ENCODE measurements at regions of chr9 and their contacts with region 1.

Region 1: DNA sequence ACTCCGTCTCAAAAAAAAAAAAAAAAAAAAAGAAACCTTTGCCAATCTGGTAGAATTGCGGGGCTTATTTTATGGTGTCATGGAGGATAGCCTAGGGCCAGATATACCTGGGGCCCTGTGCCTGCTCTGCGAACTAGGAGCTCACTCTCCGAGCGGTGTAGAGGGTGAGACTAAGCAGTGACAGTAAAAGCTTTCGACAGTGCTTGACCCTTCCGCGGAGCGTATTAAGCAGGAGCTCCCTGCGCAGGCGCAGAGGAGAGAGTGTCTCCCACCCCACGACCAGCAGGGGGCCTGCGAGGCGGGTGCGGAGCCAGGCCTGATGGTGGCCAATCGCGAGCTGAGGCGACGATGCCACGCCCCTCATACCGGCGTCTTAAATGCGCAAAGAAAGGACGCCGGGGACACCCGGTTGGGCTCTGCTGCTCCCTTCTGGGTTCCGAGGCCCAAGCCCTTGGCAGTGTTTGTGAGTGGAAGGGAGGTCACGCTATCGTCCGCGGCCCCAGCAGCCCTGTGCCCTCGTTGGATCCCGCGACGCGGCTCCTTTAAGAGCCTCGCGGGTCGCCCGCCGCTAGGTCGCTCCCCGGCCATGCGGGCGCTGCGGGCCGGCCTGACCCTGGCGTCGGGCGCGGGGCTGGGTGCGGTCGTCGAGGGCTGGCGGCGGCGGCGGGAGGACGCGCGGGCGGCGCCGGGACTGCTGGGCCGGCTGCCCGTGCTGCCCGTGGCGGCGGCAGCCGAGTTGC is at the start of gene ENDOG:
- DNase-seq: peak; percentile 99
- ATAC-seq: peak; percentile 95
- H3K4me3 Mint-ChIP-seq: peak within 1 kb of the TSS; percentile 78
- H3K27ac Mint-ChIP-seq: peak within 1 kb of the TSS; percentile 85
- H3K4me1 Mint-ChIP-seq: peaks cover 9% of the 10 kb centered on the region
- H3K27me3 Mint-ChIP-seq: no peaks in the 10 kb centered on the region
- total RNA-seq, gene ENDOG: 16.2 to 19.5 TPM

Region 2: DNA sequence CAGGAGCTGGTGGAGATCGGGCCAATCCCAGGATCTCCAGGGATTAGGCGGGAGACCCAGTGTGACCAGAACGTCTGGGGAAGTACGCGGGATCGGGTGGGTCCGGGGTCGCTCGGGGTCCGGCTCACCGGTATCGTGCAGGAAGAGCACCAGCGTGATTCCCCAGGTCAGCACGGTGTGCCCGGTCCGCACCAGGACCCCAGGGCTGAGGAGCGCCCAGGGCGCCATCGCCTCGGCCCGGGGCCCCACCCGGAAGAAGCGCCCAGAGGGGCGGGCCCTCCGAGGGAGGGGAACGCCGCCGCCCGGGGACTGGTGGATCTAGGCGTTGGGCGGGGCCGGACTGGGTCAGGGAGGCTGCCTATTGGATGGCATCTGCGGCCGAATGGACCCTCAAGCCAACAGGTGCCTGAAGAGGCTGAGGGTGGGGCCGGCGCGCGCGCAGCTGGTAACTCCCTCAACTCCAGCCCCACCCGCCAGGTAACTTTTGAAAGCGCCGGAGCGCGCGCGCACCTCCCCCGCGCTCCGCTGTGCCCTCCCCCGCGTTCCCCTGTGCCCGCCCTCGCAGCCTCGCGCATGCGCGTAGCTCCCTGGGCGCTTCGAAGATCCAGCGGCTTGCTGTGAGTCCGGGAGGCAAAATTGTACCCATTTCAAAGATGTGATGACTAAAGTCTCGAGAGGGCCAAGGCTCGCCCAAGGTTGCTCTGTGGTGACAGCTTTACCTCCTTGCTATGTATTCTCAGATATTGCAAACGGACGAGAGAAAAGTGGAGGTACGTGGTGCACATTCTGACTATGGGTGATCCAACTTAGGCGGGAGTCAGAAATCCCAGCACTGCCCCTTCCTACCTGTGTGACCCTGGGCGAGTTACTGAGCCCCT is 94.2 kb before region 1 on chr9 and contains the start of gene ZDHHC12:
- POLR2A ChIA-PET with region 1: interaction called, 10 read pairs
- DNase-seq: peak; percentile 99
- ATAC-seq: peak; percentile 99
- H3K4me3 Mint-ChIP-seq: peak within 1 kb of the TSS; percentile 91
- H3K27ac Mint-ChIP-seq: peak within 1 kb of the TSS; percentile 89
- H3K4me1 Mint-ChIP-seq: peaks cover 32% of the 10 kb centered on the region
- H3K27me3 Mint-ChIP-seq: no peaks in the 10 kb centered on the region
- total RNA-seq, gene ZDHHC12: 64.1 to 68.9 TPM

Region 3: GRCh38 chr9:128771745-128772519 is 46.3 kb before region 1 on chr9 and contains the start of gene ZER1:
- POLR2A ChIA-PET with region 1: interaction called, 12 read pairs
- DNase-seq: peak; percentile 98
- ATAC-seq: peak; percentile 90
- H3K4me3 Mint-ChIP-seq: peak within 1 kb of the TSS; percentile 98
- H3K27ac Mint-ChIP-seq: peak within 1 kb of the TSS; percentile 97
- H3K4me1 Mint-ChIP-seq: peaks cover 14% of the 10 kb centered on the region
- H3K27me3 Mint-ChIP-seq: no peaks in the 10 kb centered on the region
- total RNA-seq, gene ZER1: 27.1 to 29.2 TPM

Region 4: DNA sequence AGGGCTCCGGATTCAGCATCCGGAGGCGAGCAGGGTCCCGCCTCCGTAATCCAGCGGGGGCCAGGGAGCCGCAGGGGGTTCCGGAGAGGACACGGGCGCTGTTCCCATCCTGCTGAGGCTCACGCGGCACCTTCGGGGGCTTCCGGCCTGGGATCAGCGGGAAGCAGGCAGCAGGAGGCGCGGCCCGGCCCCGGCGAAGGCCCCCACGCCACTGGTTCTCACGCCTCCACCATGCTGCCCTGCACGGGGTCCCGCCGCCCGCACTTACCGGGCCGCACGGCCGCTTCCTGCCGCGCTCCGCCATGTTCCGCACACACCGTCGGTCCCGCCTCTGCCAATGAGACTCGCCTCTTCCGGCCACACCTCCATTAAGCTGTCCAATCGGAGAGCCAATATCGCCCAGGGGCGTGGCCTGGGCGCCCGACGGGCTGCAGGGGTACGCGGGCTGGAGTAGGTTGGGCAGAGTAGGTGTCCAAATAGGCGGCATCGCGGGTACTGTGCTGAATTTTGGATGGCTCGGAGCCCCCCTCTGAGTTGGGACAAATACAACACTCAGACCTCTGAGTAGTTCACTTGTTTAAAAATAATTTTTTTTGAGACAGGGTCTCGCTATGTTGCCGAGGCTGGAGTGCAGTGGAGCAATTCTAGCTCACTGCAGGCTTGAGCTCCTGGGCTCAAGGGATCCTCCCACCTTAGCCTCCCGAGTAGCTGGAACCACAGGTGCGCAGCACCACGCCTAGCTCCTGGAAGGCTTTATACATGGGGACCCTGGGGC is 11.4 kb after region 1 on chr9 and contains the start of gene SPOUT1:
- POLR2A ChIA-PET with region 1: interaction called, 32 read pairs
- DNase-seq: peak; percentile 95
- ATAC-seq: peak; percentile 98
- H3K4me3 Mint-ChIP-seq: peak within 1 kb of the TSS; percentile 96
- H3K27ac Mint-ChIP-seq: peak within 1 kb of the TSS; percentile 92
- H3K4me1 Mint-ChIP-seq: peaks cover 23% of the 10 kb centered on the region
- H3K27me3 Mint-ChIP-seq: no peaks in the 10 kb centered on the region
- total RNA-seq, gene SPOUT1: 71.4 to 75.4 TPM